CD4-positive, alpha-beta memory T cell (primary cell): ENCODE measurements at regions of chr1 and their contacts with region 1.

Region 1: GRCh38 chr1:153633716-153634665 is at the start of gene CHTOP:
- DNase-seq: peak; percentile 96 to 98 (median 97)
- H3K4me3 ChIP-seq: peak within 1 kb of the TSS; percentile 99
- H3K4me3 Mint-ChIP-seq: peak within 1 kb of the TSS; percentile 94 to 100 (median 98)
- H3K27ac ChIP-seq: peak within 1 kb of the TSS; percentile 100
- H3K27ac Mint-ChIP-seq: peak within 1 kb of the TSS; percentile 98 to 100 (median 100)
- H3K4me1 ChIP-seq: peaks cover 35% of the 10 kb centered on the region
- H3K4me1 Mint-ChIP-seq: peaks cover 26 to 51% (median 39%) of the 10 kb centered on the region in 4 donors
- H3K27me3 ChIP-seq: no peaks in the 10 kb centered on the region
- H3K27me3 Mint-ChIP-seq: no peaks in the 10 kb centered on the region
- total RNA-seq, gene CHTOP: 144 to 149 TPM

Region 2: GRCh38 chr1:153545067-153546055 is 88.6 kb before region 1 on chr1 and contains the start of gene S100A4:
- CTCF ChIA-PET with region 1: interaction called, 7 read pairs
- POLR2A ChIA-PET with region 1: interaction called, 34 read pairs
- intact Hi-C with region 1: loop called (anchors 2 kb)
- DNase-seq: peak; percentile 84 to 92 (median 89)
- H3K4me3 ChIP-seq: peak within 1 kb of the TSS; percentile 71 to 79
- H3K4me3 Mint-ChIP-seq: peak within 1 kb of the TSS; percentile 96 to 99 (median 98)
- H3K27ac ChIP-seq: peak within 1 kb of the TSS; percentile 74
- H3K27ac Mint-ChIP-seq: peak within 1 kb of the TSS; percentile 93 to 98 (median 97)
- H3K4me1 ChIP-seq: peaks cover 70% of the 10 kb centered on the region
- H3K4me1 Mint-ChIP-seq: peaks cover 49 to 81% (median 68%) of the 10 kb centered on the region in 4 donors
- H3K27me3 ChIP-seq: no peaks in the 10 kb centered on the region
- H3K27me3 Mint-ChIP-seq: no peaks in the 10 kb centered on the region
- total RNA-seq, gene S100A4: 329 to 346 TPM

Region 3: GRCh38 chr1:153587314-153587713 is 46.7 kb before region 1 on chr1:
- CTCF ChIA-PET with region 1: no interaction called
- POLR2A ChIA-PET with region 1: no interaction called
- intact Hi-C with region 1: no loop called
- DNase-seq: no peak
- H3K4me3 ChIP-seq: no peak overlapping the region
- H3K4me3 Mint-ChIP-seq: no peak overlapping the region
- H3K27ac ChIP-seq: no peak overlapping the region
- H3K27ac Mint-ChIP-seq: no peak overlapping the region
- H3K4me1 ChIP-seq: no peaks in the 10 kb centered on the region
- H3K4me1 Mint-ChIP-seq: no peaks in the 10 kb centered on the region
- H3K27me3 ChIP-seq: no peaks in the 10 kb centered on the region
- H3K27me3 Mint-ChIP-seq: peaks cover 1 to 3% of the 10 kb centered on the region in 2 donors

Region 4: GRCh38 chr1:153617675-153618074 is 16.3 kb before region 1 on chr1:
- CTCF ChIA-PET with region 1: interaction called, 11 read pairs
- POLR2A ChIA-PET with region 1: no interaction called
- intact Hi-C with region 1: no loop called
- DNase-seq: peak in 3 of 5 donors; percentile 50 to 63 (median 55)
- H3K4me3 ChIP-seq: no peak overlapping the region
- H3K4me3 Mint-ChIP-seq: no peak overlapping the region
- H3K27ac ChIP-seq: no peak overlapping the region
- H3K27ac Mint-ChIP-seq: peak overlapping the region in 1 of 7 donors; percentile 4
- H3K4me1 ChIP-seq: no peaks in the 10 kb centered on the region
- H3K4me1 Mint-ChIP-seq: peaks cover 0 to 5% (median 0%) of the 10 kb centered on the region in 4 donors
- H3K27me3 ChIP-seq: no peaks in the 10 kb centered on the region
- H3K27me3 Mint-ChIP-seq: peaks cover 0 to 1% of the 10 kb centered on the region in 2 donors

Region 5: DNA sequence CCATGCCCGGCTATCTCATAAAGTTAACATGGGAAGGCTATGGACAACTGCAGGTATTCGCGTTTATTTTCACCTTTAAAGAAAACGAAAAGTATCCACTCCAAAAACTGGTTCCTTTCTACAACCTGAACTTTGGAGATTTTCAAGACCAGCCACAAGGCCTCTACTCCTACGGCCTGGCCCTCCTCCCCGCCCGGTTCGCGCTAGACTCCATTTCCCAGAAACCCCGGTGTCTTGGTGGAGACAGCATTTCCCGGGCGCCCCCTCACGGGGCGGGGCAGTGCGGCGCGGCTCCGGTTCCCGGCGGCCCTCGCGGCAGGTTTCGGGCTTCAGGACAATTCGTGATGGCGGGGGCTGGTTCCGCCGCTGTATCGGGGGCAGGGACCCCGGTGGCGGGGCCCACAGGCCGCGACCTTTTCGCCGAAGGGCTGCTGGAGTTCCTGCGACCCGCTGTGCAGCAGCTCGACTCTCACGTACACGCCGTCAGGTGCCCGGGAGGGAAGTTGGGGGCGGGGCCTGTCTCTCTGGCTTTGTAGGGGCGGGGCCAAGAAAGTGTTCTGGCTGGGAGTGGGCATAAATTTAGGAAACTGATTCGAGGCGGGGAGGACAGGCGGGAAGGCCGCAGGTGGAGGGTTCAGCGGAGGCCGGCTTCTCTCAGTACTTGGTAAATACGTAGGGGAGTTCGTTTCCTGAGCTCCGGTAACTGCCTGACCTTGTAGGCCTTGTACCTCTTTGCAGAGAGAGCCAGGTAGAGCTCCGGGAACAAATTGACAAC is 24.6 kb after region 1 on chr1 and contains the start of gene SNAPIN:
- CTCF ChIA-PET with region 1: interaction called, 3 read pairs
- POLR2A ChIA-PET with region 1: interaction called, 33 read pairs
- intact Hi-C with region 1: loop called (anchors 1 kb)
- DNase-seq: peak; percentile 88 to 91 (median 89)
- H3K4me3 ChIP-seq: peak within 1 kb of the TSS; percentile 66 to 67
- H3K4me3 Mint-ChIP-seq: peak within 1 kb of the TSS; percentile 94 to 97 (median 96)
- H3K27ac ChIP-seq: peak within 1 kb of the TSS; percentile 89
- H3K27ac Mint-ChIP-seq: peak within 1 kb of the TSS; percentile 89 to 97 (median 95)
- H3K4me1 ChIP-seq: peaks cover 19% of the 10 kb centered on the region
- H3K4me1 Mint-ChIP-seq: peaks cover 9 to 25% (median 14%) of the 10 kb centered on the region in 4 donors
- H3K27me3 ChIP-seq: no peaks in the 10 kb centered on the region
- H3K27me3 Mint-ChIP-seq: no peaks in the 10 kb centered on the region
- total RNA-seq, gene SNAPIN: 26.4 to 28.2 TPM

Region 6: GRCh38 chr1:154176337-154176736 is 542.3 kb after region 1 on chr1:
- CTCF ChIA-PET with region 1: no interaction called
- POLR2A ChIA-PET with region 1: no interaction called
- intact Hi-C with region 1: no loop called
- DNase-seq: no peak
- H3K4me3 ChIP-seq: no peak overlapping the region
- H3K4me3 Mint-ChIP-seq: peak overlapping the region in 6 of 8 donors; percentile 33 to 68 (median 53)
- H3K27ac ChIP-seq: peak overlapping the region; percentile 23
- H3K27ac Mint-ChIP-seq: peak overlapping the region; percentile 32 to 98 (median 65)
- H3K4me1 ChIP-seq: peaks cover 64% of the 10 kb centered on the region
- H3K4me1 Mint-ChIP-seq: peaks cover 55 to 76% (median 66%) of the 10 kb centered on the region in 4 donors
- H3K27me3 ChIP-seq: no peaks in the 10 kb centered on the region
- H3K27me3 Mint-ChIP-seq: no peaks in the 10 kb centered on the region